Activated CD4-positive, alpha-beta T cell treated with anti-CD3 and anti-CD28 coated beads, Interleukin-2, amount 10 ng/mL, durations not matched to agents 24 days and 14 days (primary cell): ENCODE measurements at regions of chr1 and their contacts with region 1.

Region 1: GRCh38 chr1:207797229-207797961 is 45.5 kb downstream of the CD46 start:
- DNase-seq: peak; percentile 92
- H3K4me3 Mint-ChIP-seq: no peak overlapping the region
- H3K27ac Mint-ChIP-seq: no peak overlapping the region
- H3K4me1 Mint-ChIP-seq: peaks cover 32% of the 10 kb centered on the region
- H3K27me3 Mint-ChIP-seq: no peaks in the 10 kb centered on the region

Region 2: GRCh38 chr1:207565546-207566358 is 231.6 kb before region 1 on chr1:
- intact Hi-C with region 1: no loop called
- DNase-seq: peak; percentile 44
- H3K4me3 Mint-ChIP-seq: no peak overlapping the region
- H3K27ac Mint-ChIP-seq: no peak overlapping the region
- H3K4me1 Mint-ChIP-seq: no peaks in the 10 kb centered on the region
- H3K27me3 Mint-ChIP-seq: peaks cover 7% of the 10 kb centered on the region

Region 3: GRCh38 chr1:207644852-207645634 is 152.4 kb before region 1 on chr1 and contains the start of gene CR1L:
- intact Hi-C with region 1: loop called (anchors 5 kb)
- DNase-seq: peak; percentile 94
- H3K4me3 Mint-ChIP-seq: peak within 1 kb of the TSS; percentile 69
- H3K27ac Mint-ChIP-seq: no peak within 1 kb of the TSS
- H3K4me1 Mint-ChIP-seq: peaks cover 5% of the 10 kb centered on the region
- H3K27me3 Mint-ChIP-seq: peaks cover 52% of the 10 kb centered on the region
- total RNA-seq, gene CR1L: not detected in 2 replicates

Region 4: GRCh38 chr1:207711285-207711684 is 86.1 kb before region 1 on chr1:
- intact Hi-C with region 1: loop called (anchors 5 kb)
- DNase-seq: peak; percentile 57
- H3K4me3 Mint-ChIP-seq: no peak overlapping the region
- H3K27ac Mint-ChIP-seq: no peak overlapping the region
- H3K4me1 Mint-ChIP-seq: no peaks in the 10 kb centered on the region
- H3K27me3 Mint-ChIP-seq: peaks cover 6% of the 10 kb centered on the region

Region 5: DNA sequence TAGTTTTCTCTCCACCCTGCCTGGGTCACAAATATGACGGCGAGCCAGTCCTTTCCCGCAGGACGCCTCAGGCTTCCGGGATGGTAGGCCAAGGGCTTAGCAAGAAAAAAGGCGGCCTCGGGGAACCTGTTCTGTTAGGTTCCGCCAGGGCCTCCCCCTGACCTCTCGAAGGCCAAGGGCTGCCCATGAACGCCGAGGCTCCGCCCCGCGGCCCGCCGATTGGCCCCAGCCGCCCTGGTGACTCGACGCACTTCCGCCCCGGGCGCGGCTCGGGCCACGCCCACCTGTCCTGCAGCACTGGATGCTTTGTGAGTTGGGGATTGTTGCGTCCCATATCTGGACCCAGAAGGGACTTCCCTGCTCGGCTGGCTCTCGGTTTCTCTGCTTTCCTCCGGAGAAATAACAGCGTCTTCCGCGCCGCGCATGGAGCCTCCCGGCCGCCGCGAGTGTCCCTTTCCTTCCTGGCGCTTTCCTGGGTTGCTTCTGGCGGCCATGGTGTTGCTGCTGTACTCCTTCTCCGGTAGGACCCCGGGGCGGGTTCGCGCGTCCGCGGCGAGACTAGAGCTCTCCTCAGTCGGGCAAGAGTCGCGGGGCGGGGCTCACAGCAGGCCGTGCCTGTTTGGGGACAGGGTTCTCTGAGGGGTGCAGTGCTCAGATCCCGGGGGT is 45.5 kb before region 1 on chr1 and contains the start of gene CD46:
- intact Hi-C with region 1: loop called (anchors 2 kb)
- DNase-seq: peak; percentile 99
- H3K4me3 Mint-ChIP-seq: peak within 1 kb of the TSS; percentile 98
- H3K27ac Mint-ChIP-seq: peak within 1 kb of the TSS; percentile 98
- H3K4me1 Mint-ChIP-seq: peaks cover 59% of the 10 kb centered on the region
- H3K27me3 Mint-ChIP-seq: no peaks in the 10 kb centered on the region
- total RNA-seq, gene CD46: 96.3 and 107 TPM in 2 replicates

Region 6: DNA sequence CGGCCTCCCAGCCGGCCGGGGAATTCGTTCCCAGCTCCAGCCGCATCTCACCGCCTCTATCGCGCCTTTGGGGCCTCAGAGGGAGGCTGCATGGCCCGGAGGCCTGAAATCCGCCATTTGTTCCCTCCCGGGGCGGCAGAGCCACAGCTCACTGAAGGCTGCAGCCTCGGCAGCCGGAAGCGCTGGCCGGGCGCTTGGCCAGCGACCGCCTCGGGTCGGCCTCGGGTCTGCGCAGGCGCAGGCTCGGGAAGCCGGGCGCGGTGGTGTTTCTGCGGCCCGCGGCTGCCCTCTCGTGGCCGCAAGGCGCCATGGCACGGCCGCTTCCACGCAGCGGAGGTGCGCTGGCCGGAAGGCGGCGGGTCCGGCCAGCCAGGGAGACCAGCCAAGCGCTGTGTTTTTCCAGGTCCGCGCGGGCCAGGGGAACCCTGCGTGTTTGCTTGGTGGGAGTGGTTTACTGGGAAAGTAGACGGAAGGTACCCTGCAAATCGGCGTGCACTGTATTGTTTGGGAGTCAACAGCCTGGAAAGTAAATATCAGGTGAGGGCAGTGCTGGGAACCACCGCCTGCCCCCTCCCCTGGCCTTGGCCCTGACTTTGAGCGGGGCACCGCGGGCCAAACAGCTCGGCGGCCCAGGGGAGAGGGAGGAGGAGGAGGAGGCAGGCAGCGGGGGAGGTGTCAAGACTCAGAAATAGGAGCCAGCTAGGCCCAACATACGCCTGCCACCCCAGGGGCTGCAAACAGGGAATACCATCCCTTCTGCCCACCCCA is 166.2 kb after region 1 on chr1:
- intact Hi-C with region 1: loop called (anchors 2 kb)
- DNase-seq: peak; percentile 96
- H3K4me3 Mint-ChIP-seq: peak overlapping the region; percentile 84
- H3K27ac Mint-ChIP-seq: no peak overlapping the region
- H3K4me1 Mint-ChIP-seq: peaks cover 12% of the 10 kb centered on the region
- H3K27me3 Mint-ChIP-seq: peaks cover 42% of the 10 kb centered on the region